Left cardiac atrium (tissue), 4 donors: ENCODE measurements at regions of chr18 and their contacts with region 1.

Region 1: GRCh38 chr18:37385846-37386778 is 179.5 kb downstream of the CELF4 start:
- DNase-seq: no peak
- ATAC-seq: no peak

Region 2: GRCh38 chr18:37476182-37476581 is 90.1 kb after region 1 on chr18:
- intact Hi-C with region 1: loop called (anchors 5 to 10 kb)
- DNase-seq: no peak
- ATAC-seq: no peak

Region 3: DNA sequence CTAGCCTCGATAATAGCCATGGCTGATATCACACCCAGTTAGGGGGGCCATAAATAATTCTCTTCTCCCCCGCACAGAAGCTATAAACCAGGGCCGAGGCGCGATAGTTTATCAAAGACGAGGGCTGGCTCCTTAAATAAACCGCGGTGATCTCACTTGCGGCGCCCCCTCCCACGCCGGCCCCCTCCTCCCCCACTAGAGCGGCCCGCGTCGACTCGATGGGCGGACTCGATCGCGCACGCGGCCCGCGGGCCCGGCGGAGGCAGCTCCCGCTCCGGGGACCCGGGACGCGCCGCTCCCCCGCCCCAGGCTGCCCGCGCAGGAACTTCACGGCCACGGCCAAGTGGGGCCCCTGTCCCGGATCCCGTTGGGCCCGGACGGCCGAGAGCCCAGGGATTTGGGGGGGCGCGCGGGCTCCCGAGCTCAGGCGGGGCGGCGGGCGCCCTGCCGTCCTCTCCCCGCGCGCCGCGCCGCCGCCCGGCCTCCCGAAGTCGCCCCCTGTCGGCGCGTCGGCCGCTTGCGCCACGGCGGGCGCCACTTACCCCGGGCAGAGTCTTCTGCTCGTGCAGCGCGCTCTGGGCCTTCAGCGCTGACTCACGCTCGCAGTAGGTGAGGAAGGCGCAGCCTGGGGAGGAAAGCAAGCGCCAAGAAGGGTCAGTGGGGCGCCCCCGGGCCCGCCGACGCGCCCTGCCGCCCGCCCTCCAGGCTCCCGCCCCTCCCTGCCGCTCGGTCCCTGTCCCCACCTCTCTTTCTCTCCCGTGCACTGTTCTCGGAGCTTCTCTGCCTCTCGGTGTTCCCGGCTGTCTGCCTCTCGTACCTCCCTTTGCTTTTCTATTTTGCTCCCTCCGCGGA is 99.1 kb after region 1 on chr18:
- intact Hi-C with region 1: loop called in 1 of 2 experiments (anchors 10 kb)
- DNase-seq: peak; percentile 36
- ATAC-seq: peak in 1 of 2 donors; percentile 67

Region 4: DNA sequence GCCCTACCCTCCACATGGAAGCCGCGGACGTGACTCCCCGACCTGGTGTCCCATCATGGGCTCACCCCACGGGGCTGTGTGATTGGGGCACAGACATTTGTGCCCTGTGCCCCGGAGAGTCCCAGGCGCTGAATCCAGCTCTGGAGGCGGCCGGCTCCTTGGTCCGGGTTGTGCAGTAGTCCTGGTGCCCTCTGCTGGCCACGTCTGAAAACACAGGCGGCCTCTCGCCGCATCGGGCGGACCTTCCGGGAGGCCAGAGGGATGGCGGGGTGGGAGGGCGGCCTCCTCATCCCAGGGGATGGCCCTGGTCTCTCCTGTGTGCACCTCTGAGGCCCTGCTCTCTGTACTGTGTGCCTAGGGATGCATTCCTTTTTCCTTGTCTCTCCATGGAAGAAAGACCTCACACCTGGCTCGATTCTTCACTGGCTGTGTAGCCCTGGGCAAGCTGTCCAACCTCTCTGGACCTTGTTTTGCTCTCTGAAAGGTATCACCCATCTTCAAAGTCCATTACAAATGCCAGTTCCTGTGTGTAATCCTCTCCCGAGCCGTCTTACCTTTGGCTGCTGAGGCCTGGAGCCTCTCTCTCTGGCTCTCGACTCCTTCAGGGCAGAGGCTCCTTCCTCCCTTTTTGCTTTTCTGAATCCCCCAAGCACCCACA is 151.9 kb after region 1 on chr18:
- intact Hi-C with region 1: loop called (anchors 2 kb)
- DNase-seq: peak; percentile 77
- ATAC-seq: peak; percentile 86 to 89